ENCODE measurements at regions of chr6 and their contacts with region 1.

Region 1: DNA sequence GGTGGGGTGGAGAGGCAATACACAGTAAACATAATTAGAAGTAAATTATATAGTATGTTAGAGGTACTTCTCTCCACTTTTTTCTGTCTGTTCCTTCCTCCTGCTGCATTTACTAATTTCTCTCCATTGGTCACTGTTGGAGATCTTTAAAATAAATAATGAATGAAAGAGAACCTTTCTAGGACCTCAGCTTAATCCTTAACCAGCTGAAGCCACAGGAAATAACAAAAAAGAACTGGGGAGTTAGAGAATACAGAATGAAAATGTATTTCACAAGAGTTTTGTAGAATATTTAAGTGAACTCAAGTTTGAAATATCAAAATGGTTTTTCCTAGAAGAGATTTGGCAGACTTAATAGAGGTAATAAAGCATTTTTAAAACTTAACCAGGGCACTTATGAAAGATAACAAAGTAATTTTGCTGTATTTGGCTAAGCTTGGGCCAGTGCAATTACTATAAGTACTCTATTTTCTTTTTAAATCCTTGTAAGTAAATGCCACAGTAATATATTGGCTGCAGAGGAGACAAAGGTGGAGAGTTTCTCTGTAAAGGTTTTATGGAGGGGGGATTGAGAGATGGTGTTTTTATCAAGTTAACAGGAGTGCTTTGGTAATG is 405.0 kb downstream of the CDKAL1 start:
- DNase-seq: no peak

Region 2: GRCh38 chr6:19083809-19084208 is 1855.5 kb before region 1 on chr6:
- intact Hi-C with region 1: no loop called
- DNase-seq: no peak

Region 3: GRCh38 chr6:22043284-22043962 is 1104.2 kb after region 1 on chr6:
- intact Hi-C with region 1: loop called in 1 of 2 experiments (anchors 5 kb)
- DNase-seq: no peak

Measured in posterior vena cava (tissue), 2 donors.